ENCODE measurements at regions of chr21 and their contacts with region 1.

Region 1: GRCh38 chr21:44338971-44339910 is at the start of gene CFAP410:
- DNase-seq: peak; percentile 87 to 98 (median 94)
- ATAC-seq: peak; percentile 88
- H3K4me3 ChIP-seq: peak within 1 kb of the TSS; percentile 90
- H3K4me3 Mint-ChIP-seq: peak within 1 kb of the TSS; percentile 93
- H3K27ac ChIP-seq: peak within 1 kb of the TSS; percentile 93 to 96
- H3K27ac Mint-ChIP-seq: peak within 1 kb of the TSS; percentile 99
- H3K4me1 ChIP-seq: peaks cover 20% of the 10 kb centered on the region
- H3K4me1 Mint-ChIP-seq: peaks cover 25% of the 10 kb centered on the region
- H3K27me3 ChIP-seq: no peaks in the 10 kb centered on the region
- H3K27me3 Mint-ChIP-seq: no peaks in the 10 kb centered on the region
- CTCF ChIP-seq: no peak
- total RNA-seq, gene CFAP410: 50.1 to 51.6 TPM

Region 2: DNA sequence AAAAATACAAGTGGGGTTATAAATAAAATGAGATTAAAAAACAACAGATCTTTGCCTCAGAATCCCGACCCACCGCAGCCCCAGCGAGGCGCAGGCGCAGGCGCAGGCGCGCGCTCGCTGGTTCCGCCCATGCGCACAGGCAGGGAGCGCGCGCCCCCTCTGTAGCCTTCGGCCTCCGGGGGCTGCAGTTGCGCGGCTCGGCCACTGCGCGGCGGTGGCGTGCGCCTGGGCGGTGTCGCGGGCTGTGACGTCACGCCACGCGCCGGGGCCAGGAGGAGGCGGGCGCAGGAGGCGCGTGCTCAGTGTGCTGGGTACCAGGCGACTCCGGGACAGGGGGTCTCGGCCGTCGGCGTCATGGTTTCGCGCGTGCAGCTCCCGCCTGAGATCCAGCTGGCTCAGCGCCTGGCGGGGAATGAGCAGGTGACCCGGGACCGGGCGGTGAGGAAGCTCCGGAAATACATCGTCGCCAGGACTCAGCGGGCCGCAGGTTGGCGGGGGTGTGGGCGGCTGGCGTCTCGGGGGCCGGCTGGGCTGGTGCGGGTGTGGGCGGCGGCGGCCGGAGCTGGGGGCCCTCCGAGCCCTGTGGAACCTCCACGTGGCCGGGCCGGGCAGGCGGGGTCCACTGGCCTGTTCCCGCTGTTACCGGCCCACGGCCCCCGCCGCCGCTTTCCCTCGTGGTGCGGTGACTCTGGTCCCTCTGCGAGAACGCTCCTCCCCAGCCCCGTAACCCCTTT is 549.8 kb before region 1 on chr21 and contains the start of gene RRP1:
- CTCF ChIA-PET with region 1: no interaction called
- POLR2A ChIA-PET with region 1: no interaction called
- intact Hi-C with region 1: loop called in 1 of 2 experiments (anchors 10 kb)
- DNase-seq: peak; percentile 85 to 98 (median 94)
- ATAC-seq: peak; percentile 93
- H3K4me3 ChIP-seq: peak within 1 kb of the TSS; percentile 76
- H3K4me3 Mint-ChIP-seq: peak within 1 kb of the TSS; percentile 95
- H3K27ac ChIP-seq: peak within 1 kb of the TSS; percentile 44 to 55
- H3K27ac Mint-ChIP-seq: peak within 1 kb of the TSS; percentile 84
- H3K4me1 ChIP-seq: peaks cover 27% of the 10 kb centered on the region
- H3K4me1 Mint-ChIP-seq: peaks cover 18% of the 10 kb centered on the region
- H3K27me3 ChIP-seq: no peaks in the 10 kb centered on the region
- H3K27me3 Mint-ChIP-seq: no peaks in the 10 kb centered on the region
- CTCF ChIP-seq: peak; percentile 92
- total RNA-seq, gene RRP1: 27.7 to 29.0 TPM

Region 3: DNA sequence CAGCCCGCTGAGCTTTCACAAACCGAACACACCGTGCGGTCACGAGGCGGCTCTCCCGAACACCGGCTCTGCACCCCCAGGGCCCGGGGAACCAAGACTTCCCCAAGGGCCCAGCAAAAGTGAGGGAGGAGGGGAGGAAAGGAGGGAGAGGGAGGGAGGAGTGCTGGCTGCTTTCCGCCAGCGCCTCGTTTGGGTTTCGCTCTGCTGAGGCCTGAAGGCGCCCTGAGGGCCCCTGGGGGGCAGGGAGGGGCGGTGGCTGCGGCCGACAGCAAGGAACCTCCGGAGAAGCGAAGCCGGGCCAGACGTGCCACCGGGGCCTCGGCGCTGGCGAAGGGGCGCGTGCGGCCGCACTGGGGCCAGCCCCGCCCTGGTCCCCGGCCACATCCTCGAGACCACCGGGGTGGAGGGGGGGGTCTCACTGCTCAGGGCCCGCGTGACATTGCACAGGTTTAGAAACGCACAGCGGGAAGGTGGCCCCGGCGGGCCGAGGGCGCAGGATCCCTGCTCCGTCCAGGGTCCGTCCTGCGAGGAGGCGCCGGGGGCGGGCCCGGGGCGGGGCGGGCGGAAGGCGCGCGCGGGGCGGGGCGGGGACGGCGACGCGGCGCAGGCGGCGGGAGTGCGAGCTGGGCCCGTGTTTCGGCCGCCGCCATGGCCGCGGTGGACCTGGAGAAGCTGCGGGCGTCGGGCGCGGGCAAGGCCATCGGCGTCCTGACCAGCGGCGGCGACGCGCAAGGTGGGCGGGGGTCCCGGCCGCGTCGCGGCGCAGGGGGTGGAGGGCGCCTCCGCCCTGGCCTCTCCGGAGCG is 39.6 kb before region 1 on chr21 and contains the start of gene PFKL:
- CTCF ChIA-PET with region 1: interaction called, 3 read pairs
- POLR2A ChIA-PET with region 1: interaction called, 10 read pairs
- intact Hi-C with region 1: loop called in 1 of 2 experiments (anchors 2 kb)
- DNase-seq: peak in 12 of 14 experiments; percentile 31 to 77 (median 52)
- ATAC-seq: peak; percentile 48
- H3K4me3 ChIP-seq: peak within 1 kb of the TSS; percentile 69
- H3K4me3 Mint-ChIP-seq: peak within 1 kb of the TSS; percentile 95
- H3K27ac ChIP-seq: peak within 1 kb of the TSS; percentile 52 to 67
- H3K27ac Mint-ChIP-seq: peak within 1 kb of the TSS; percentile 97
- H3K4me1 ChIP-seq: peaks cover 83% of the 10 kb centered on the region
- H3K4me1 Mint-ChIP-seq: peaks cover 51% of the 10 kb centered on the region
- H3K27me3 ChIP-seq: no peaks in the 10 kb centered on the region
- H3K27me3 Mint-ChIP-seq: no peaks in the 10 kb centered on the region
- CTCF ChIP-seq: no peak
- total RNA-seq, gene PFKL: 115 to 117 TPM

Region 4: GRCh38 chr21:44454747-44455523 is 115.7 kb after region 1 on chr21 and contains the start of gene LRRC3:
- CTCF ChIA-PET with region 1: no interaction called
- POLR2A ChIA-PET with region 1: interaction called, 3 read pairs
- intact Hi-C with region 1: loop called in 1 of 2 experiments (anchors 1 kb)
- DNase-seq: peak; percentile 66 to 93 (median 80)
- ATAC-seq: peak; percentile 82
- H3K4me3 ChIP-seq: peak within 1 kb of the TSS; percentile 56
- H3K4me3 Mint-ChIP-seq: peak within 1 kb of the TSS; percentile 84
- H3K27ac ChIP-seq: no peak within 1 kb of the TSS
- H3K27ac Mint-ChIP-seq: no peak within 1 kb of the TSS
- H3K4me1 ChIP-seq: peaks cover 15% of the 10 kb centered on the region
- H3K4me1 Mint-ChIP-seq: peaks cover 11% of the 10 kb centered on the region
- H3K27me3 ChIP-seq: no peaks in the 10 kb centered on the region
- H3K27me3 Mint-ChIP-seq: peaks cover 9% of the 10 kb centered on the region
- CTCF ChIP-seq: no peak
- total RNA-seq, gene LRRC3: 0.55 to 0.61 TPM